Right lobe of liver (tissue), 6 donors: ENCODE measurements at regions of chr2 and their contacts with region 1.

Region 1: GRCh38 chr2:113370478-113371091 is 66.9 kb upstream of the ZNG1B start:
- DNase-seq: peak; percentile 68 to 83 (median 77)
- ATAC-seq: peak; percentile 95 to 97 (median 96)
- H3K4me3 ChIP-seq: no peak overlapping the region
- H3K27ac ChIP-seq: peak overlapping the region; percentile 58 to 85 (median 64)
- H3K4me1 ChIP-seq: peaks cover 0 to 12% (median 0%) of the 10 kb centered on the region in 4 donors
- H3K27me3 ChIP-seq: no peaks in the 10 kb centered on the region
- CTCF ChIP-seq: peak; percentile 68 to 95 (median 72)
- POLR2A ChIP-seq: no peak

Region 2: DNA sequence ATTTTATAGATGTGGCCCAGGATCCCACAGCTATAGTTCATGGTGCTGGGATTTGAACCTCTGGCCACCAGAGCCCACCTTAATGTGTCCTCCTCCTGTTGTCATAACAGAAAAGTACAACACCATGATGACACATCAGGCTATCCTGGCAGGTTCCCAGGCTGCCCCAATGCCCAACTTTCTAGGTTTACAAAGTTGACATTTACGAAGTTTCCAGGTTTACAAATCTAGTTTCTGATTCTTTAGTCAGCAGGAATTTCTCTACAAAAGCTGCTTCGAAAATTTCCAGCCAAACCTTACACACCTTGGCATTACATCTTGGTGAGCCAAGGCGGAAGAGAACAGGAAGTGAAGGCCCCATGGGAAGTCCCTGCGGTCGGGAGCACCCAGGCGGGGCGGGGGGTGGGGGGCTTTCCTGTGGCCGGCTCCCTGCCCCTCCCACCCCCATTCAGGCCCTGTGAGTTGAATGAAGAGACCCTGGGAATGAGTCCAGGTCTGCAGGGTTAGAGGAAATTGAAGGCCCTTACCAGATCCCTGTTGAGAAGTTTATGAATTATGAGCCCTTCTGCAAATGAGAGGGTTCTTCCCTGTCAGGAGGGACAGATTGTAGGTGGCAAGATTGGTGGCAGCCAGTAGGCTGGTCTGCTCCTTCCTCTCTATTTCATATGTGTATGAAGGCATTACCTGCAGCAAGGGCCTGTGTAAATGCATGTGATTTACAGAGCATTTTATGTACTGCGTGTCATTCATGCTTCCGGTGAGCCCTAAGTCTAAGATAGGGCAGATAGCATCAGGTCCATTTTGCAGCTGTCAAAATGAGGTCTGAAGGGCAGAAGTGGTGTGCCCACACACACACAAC is 254.3 kb before region 1 on chr2:
- intact Hi-C with region 1: no loop called
- DNase-seq: no peak
- ATAC-seq: no peak
- H3K4me3 ChIP-seq: no peak overlapping the region
- H3K27ac ChIP-seq: no peak overlapping the region
- H3K4me1 ChIP-seq: peaks cover 0 to 4% (median 0%) of the 10 kb centered on the region in 4 donors
- H3K27me3 ChIP-seq: no peaks in the 10 kb centered on the region
- CTCF ChIP-seq: no peak
- POLR2A ChIP-seq: no peak

Region 3: GRCh38 chr2:113248997-113249770 is 121.4 kb before region 1 on chr2:
- intact Hi-C with region 1: loop called in 1 of 2 experiments (anchors 5 kb)
- DNase-seq: peak; percentile 76 to 86 (median 84)
- ATAC-seq: peak; percentile 74 to 84 (median 78)
- H3K4me3 ChIP-seq: no peak overlapping the region
- H3K27ac ChIP-seq: peak overlapping the region in 2 of 3 donors; percentile 15 to 55
- H3K4me1 ChIP-seq: peaks cover 0 to 33% (median 14%) of the 10 kb centered on the region in 4 donors
- H3K27me3 ChIP-seq: no peaks in the 10 kb centered on the region
- CTCF ChIP-seq: peak; percentile 90 to 94 (median 92)
- POLR2A ChIP-seq: no peak

Region 4: GRCh38 chr2:113324684-113325160 is 45.9 kb before region 1 on chr2:
- intact Hi-C with region 1: no loop called
- DNase-seq: peak; percentile 66 to 72 (median 67)
- ATAC-seq: peak; percentile 77 to 87 (median 82)
- H3K4me3 ChIP-seq: peak overlapping the region; percentile 40 to 60 (median 58)
- H3K27ac ChIP-seq: peak overlapping the region; percentile 60 to 79 (median 73)
- H3K4me1 ChIP-seq: peaks cover 0 to 29% (median 0%) of the 10 kb centered on the region in 4 donors
- H3K27me3 ChIP-seq: no peaks in the 10 kb centered on the region
- CTCF ChIP-seq: no peak
- POLR2A ChIP-seq: no peak